ENCODE measurements at regions of chr10 and their contacts with region 1.

Region 1: DNA sequence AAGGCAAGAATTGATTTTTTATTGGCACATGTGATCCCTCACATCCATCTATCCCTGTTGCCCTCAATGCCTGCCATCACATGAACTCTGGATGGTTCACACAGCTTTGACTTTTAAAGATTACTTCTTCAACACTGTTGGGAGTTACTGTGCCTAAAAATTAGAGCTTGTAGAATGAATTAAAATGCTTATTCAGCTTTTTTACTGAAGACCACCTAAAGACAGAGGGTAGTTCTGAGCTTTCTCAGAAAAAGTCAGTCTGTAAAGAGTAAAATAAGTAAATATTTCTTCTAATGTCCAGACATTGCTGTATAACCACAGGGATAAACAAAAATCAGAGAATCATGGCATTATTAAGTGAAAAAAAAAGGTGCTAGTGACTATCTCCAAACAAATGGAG is 93.3 kb upstream of the CSTF2T start:
- DNase-seq: no peak
- ATAC-seq: no peak
- H3K4me3 ChIP-seq: no peak overlapping the region
- H3K27ac ChIP-seq: no peak overlapping the region
- H3K4me1 ChIP-seq: no peaks in the 10 kb centered on the region
- H3K27me3 ChIP-seq: no peaks in the 10 kb centered on the region
- CTCF ChIP-seq: no peak
- POLR2A ChIP-seq: no peak
- RAD21 ChIP-seq: no peak

Region 2: DNA sequence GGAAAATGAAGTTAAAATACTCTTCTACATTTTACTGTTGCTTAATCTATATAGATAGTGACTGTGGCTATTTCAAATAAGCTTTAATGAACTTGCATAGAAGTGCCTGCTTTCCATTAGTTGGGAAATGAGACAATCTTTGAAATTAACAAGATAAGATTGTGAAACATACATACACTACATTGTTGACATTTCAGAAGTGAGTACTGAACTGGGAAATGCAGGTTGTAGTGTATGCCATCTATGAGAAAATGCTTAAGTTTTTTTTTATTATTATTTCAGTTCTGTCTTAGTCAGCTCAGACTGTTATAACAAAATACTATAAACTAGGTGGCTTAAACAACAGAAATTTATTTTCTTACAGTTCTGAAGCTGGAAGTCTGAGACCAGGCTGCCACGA is 43.7 kb before region 1 on chr10:
- CTCF ChIA-PET with region 1: no interaction called
- POLR2A ChIA-PET with region 1: no interaction called
- dilution Hi-C with region 1: no loop called
- in situ Hi-C with region 1: no loop called
- intact Hi-C with region 1: loop called (anchors 1 kb)
- DNase-seq: peak; percentile 65
- ATAC-seq: peak; percentile 94
- H3K4me3 ChIP-seq: no peak overlapping the region
- H3K27ac ChIP-seq: peak overlapping the region; percentile 41; the same call in 1 of the 2 replicates
- H3K4me1 ChIP-seq: peaks cover 4% of the 10 kb centered on the region
- H3K27me3 ChIP-seq: no peaks in the 10 kb centered on the region
- CTCF ChIP-seq: no peak
- POLR2A ChIP-seq: no peak
- RAD21 ChIP-seq: no peak